ENCODE measurements at regions of chr19 and their contacts with region 1.

Region 1: DNA sequence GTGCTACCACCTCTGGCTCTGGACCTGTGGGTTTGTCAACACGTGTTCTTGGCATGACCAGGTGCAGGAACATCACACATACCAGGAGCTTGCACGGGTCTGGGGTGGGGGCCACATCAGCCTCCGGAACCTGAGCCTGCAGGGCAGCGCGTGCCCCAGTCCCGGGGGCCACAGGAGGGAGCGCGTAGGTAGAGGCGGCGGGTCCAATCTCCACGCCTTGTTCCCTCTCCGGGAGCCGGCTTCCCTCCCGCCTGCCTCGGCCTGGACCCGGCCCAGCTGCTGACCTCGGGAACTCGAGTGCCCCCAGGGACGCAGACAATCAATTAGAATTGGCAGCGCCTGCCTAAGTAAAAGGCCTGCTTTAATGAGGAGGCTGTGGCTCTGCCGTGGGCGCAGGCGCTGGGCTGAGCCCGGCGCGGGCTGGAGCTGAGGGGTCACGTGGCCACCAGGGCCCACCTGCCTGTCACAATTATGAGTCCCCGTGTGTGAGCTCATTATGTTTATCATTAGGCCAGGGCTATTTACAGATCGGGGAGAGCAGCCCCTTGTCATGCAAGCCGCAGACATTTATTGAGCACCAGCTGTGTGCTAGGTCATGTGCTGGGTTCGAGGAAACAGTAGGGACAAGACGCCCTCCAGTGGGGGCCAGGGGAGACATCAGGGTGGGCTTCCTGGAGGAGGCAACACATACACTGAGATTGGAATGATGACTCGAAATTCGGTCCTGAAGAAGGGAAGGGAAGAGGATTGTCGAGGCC is 32.2 kb upstream of the TNFAIP8L1 start:
- DNase-seq: peak in 1 of 2 experiments; percentile 74
- H3K4me3 ChIP-seq: peak overlapping the region; percentile 3 to 47 (median 25); a peak in 5 of 8 replicates
- H3K27ac ChIP-seq: no peak overlapping the region
- H3K4me1 ChIP-seq: peaks cover 0 to 4% (median 2%) of the 10 kb centered on the region in 4 experiments; a peak in 4 of 7 replicates
- H3K27me3 ChIP-seq: peaks cover 0 to 2% (median 0%) of the 10 kb centered on the region in 4 experiments; a peak in 4 of 7 replicates
- CTCF ChIP-seq: peak; percentile 50 to 68 (median 62)
- EP300 ChIP-seq: no peak
- POLR2A ChIP-seq: no peak
- RAD21 ChIP-seq: peak; percentile 53 to 70

Region 2: GRCh38 chr19:4576016-4576933 is 30.8 kb before region 1 on chr19:
- CTCF ChIA-PET with region 1: interaction called, 57 read pairs
- POLR2A ChIA-PET with region 1: interaction called, 5 read pairs
- DNase-seq: peak in 1 of 2 experiments; percentile 96
- H3K4me3 ChIP-seq: 0 out of 8 replicates have a peak overlapping the region, but pooled peaks of 1 of the 4 experiments have one; percentile 36
- H3K27ac ChIP-seq: no peak overlapping the region
- H3K4me1 ChIP-seq: peaks cover 3 to 9% (median 7%) of the 10 kb centered on the region in 4 experiments
- H3K27me3 ChIP-seq: no peaks in the 10 kb centered on the region
- CTCF ChIP-seq: peak; percentile 79 to 94 (median 88)
- EP300 ChIP-seq: no peak
- POLR2A ChIP-seq: no peak
- RAD21 ChIP-seq: peak; percentile 55 to 66

Region 3: GRCh38 chr19:4589579-4590410 is 17.3 kb before region 1 on chr19:
- CTCF ChIA-PET with region 1: interaction called, 18 read pairs
- POLR2A ChIA-PET with region 1: no interaction called
- DNase-seq: peak in 1 of 2 experiments; percentile 57
- H3K4me3 ChIP-seq: no peak overlapping the region
- H3K27ac ChIP-seq: no peak overlapping the region
- H3K4me1 ChIP-seq: no peaks in the 10 kb centered on the region; a peak in 1 of 7 replicates
- H3K27me3 ChIP-seq: peaks cover 0 to 6% (median 4%) of the 10 kb centered on the region in 4 experiments; a peak in 3 of 7 replicates
- CTCF ChIP-seq: peak; percentile 27 to 33 (median 31)
- EP300 ChIP-seq: no peak
- POLR2A ChIP-seq: no peak
- RAD21 ChIP-seq: peak; percentile 21 to 29; a peak in 2 of 4 replicates

Measured in H1 (cell line).